Gastrocnemius medialis (tissue), 4 donors: ENCODE measurements at regions of chr19 and their contacts with region 1.

Region 1: GRCh38 chr19:57279418-57280066 is 743 bp upstream of the ZNF460 start:
- DNase-seq: peak; percentile 89 to 93
- ATAC-seq: peak; percentile 90 to 94
- H3K4me3 ChIP-seq: peak overlapping the region; percentile 96 to 97 (median 96)
- H3K27ac ChIP-seq: peak overlapping the region; percentile 93 to 99 (median 96)
- H3K4me1 ChIP-seq: peaks cover 31 to 39% of the 10 kb centered on the region in 2 donors
- H3K27me3 ChIP-seq: no peaks in the 10 kb centered on the region
- CTCF ChIP-seq: peak in 3 of 5 experiments; percentile 31 to 52 (median 33)
- POLR2A ChIP-seq: no peak

Region 2: DNA sequence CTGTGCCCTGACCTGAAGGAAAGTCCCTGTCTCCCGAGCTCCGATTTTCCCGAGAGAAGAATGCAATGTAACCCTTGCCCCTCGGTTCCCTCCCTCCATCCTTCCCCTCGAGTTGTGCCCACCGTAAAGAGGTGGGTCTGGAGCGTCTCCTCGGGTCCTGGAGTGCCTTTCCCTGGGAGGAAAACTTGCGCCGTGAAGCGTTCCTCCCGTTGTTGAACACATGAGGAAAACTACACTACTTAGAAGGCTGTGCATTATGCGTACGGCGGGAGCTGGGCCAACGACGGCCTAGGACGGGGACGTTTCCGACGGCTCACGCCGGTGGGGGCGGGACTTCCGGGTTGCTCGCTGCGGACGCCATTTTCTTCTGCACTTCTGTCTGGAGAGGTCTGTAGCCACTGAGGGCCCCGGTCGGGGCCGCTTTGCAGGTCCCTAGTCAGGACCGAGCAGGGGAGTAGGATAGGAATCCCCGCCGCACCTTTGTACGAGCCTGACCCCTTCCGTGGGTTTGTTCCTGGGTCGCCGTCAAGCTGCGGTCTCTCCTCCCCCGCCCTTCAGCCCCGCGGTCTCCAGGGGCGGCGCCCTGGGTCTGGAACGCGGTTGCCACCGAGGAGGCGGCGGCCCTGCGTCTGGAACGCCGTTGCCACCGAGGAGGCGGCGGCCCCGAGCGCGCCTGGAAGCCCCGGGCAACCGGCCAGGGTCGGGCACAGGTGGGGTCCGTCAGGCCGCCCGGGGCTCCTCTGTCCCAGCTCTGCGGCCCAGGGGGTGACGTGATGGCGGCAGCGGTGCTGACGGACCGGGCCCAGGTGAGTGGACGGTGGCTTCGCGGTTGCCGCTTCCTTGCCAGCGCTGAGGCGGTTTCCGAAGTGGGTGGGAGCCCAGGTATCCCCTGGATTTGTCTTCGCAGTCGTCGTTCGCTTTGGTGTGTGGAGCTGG is 88.1 kb before region 1 on chr19 and contains the start of gene ZNF264:
- in situ Hi-C with region 1: no loop called
- intact Hi-C with region 1: loop called (anchors 5 kb)
- DNase-seq: peak; percentile 74 to 85
- ATAC-seq: peak; percentile 96 to 97
- H3K4me3 ChIP-seq: peak within 1 kb of the TSS; percentile 92 to 96 (median 94)
- H3K27ac ChIP-seq: peak within 1 kb of the TSS; percentile 84 to 96 (median 85)
- H3K4me1 ChIP-seq: peaks cover 19 to 25% of the 10 kb centered on the region in 2 donors
- H3K27me3 ChIP-seq: peaks cover 0 to 11% (median 0%) of the 10 kb centered on the region in 3 donors
- CTCF ChIP-seq: no peak
- POLR2A ChIP-seq: peak in 1 of 2 donors; percentile 32
- total RNA-seq, gene ZNF264: 11.3 to 21.8 (median 16.9) TPM

Region 3: DNA sequence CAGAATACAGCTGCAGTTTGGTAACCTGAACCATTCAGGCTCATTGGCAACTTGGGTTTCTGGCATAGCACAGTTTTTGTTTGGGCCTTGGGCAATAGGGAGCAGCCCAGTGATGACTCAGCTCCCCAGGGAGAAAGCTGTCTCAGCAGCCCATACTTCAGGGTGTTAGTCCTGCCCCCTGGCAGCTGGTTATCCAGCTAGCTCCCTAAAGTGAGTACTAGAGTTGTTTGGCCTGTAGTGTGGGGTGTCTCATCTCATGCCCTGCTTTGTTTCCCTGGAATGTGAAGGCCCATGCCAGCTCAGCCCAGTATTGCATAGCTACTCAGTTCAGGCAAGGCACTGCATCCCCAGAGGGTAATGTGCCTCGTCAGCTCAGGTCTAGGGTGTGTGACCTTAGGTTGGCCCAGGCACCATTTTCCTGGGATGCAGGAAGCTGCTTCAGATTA is 22.5 kb after region 1 on chr19:
- in situ Hi-C with region 1: no loop called
- intact Hi-C with region 1: loop called (anchors 2 kb)
- DNase-seq: peak; percentile 81 to 91
- ATAC-seq: peak; percentile 99 to 100
- H3K4me3 ChIP-seq: no peak overlapping the region
- H3K27ac ChIP-seq: peak overlapping the region; percentile 77 to 83 (median 80)
- H3K4me1 ChIP-seq: peaks cover 23 to 30% of the 10 kb centered on the region in 2 donors
- H3K27me3 ChIP-seq: no peaks in the 10 kb centered on the region
- CTCF ChIP-seq: no peak
- POLR2A ChIP-seq: no peak

Region 4: DNA sequence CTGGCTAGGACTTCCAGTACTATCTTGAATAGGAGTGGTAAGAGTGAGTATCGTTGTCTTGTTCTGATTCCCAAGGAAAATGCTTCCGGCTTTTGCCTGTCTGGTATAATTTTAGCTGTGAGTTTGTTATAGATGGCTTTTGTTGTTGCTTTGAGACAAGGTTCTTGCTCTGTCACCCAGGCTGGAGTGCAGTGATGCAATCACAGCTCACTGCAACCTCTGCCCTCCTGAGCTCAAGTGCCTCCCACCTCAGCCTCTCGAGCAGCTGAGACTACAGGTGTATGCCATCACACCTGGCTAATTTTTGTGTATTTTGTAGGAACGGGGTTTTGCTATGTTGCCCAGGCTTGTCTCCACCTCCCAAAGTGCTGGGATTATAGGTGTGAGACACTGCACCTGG is 34.6 kb after region 1 on chr19:
- in situ Hi-C with region 1: no loop called
- intact Hi-C with region 1: no loop called
- DNase-seq: no peak
- ATAC-seq: no peak
- H3K4me3 ChIP-seq: no peak overlapping the region
- H3K27ac ChIP-seq: no peak overlapping the region
- H3K4me1 ChIP-seq: no peaks in the 10 kb centered on the region
- H3K27me3 ChIP-seq: no peaks in the 10 kb centered on the region
- CTCF ChIP-seq: no peak
- POLR2A ChIP-seq: no peak

Region 5: GRCh38 chr19:57350877-57351805 is 71.6 kb after region 1 on chr19 and contains the start of gene ZNF304:
- in situ Hi-C with region 1: loop called in 1 of 4 experiments (anchors 5 kb)
- intact Hi-C with region 1: loop called (anchors 1 kb)
- DNase-seq: peak; percentile 90 to 93
- ATAC-seq: peak; percentile 97 to 98
- H3K4me3 ChIP-seq: peak within 1 kb of the TSS; percentile 77 to 99 (median 93)
- H3K27ac ChIP-seq: peak within 1 kb of the TSS; percentile 78 to 96 (median 92)
- H3K4me1 ChIP-seq: peaks cover 22 to 29% of the 10 kb centered on the region in 2 donors
- H3K27me3 ChIP-seq: no peaks in the 10 kb centered on the region
- CTCF ChIP-seq: no peak
- POLR2A ChIP-seq: peak; percentile 33 to 36
- total RNA-seq, gene ZNF304: 4.1 to 6.5 (median 4.8) TPM

Region 6: DNA sequence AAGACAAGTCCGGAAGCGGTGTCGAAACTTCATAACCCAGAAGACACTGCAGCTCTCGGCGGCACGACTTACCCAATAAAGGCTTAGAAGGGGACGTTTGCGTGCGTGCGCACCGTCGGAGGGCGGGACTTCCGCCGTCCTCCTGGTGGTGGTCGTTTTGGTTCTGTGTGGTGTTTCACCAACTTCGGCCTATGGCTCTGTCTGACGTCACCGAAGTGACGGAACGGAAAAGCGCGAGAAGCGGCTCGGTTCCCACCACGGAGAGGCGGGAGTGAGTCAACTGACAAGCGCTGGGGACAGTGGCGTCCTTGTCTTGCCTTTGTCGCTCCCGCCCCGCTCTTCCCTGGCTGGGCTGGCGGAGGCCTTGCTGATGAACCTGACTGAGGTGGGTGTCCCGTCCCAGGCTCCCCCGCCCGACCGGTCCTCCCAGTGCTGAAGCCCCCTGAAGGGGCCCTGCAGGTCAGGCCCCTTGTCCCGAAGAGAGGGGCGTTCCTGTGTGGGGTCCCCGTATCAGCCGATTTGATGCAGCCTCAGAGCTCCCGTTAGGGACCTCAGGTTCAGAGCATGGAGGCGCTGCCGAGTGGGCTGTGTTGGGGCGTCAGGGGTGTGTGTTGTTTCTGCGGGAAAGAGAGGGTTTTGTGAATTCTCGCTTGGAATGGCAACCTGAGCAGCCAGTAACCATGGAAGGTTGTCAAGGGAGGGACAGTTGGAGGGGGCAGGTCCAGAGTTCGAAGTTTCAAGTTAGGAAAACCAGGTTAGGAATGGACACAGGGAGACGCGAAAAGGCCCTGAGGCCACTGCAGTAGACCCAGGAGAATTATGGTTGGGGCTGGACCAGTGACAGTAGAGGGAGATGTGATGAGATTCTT is 110.4 kb after region 1 on chr19 and contains the start of gene ZNF548:
- in situ Hi-C with region 1: no loop called
- intact Hi-C with region 1: loop called (anchors 1 kb)
- DNase-seq: peak; percentile 97 to 98
- ATAC-seq: peak; percentile 100
- H3K4me3 ChIP-seq: peak within 1 kb of the TSS; percentile 75 to 85 (median 81)
- H3K27ac ChIP-seq: peak within 1 kb of the TSS; percentile 87 to 98 (median 92)
- H3K4me1 ChIP-seq: peaks cover 22 to 26% of the 10 kb centered on the region in 2 donors
- H3K27me3 ChIP-seq: no peaks in the 10 kb centered on the region
- CTCF ChIP-seq: peak in 4 of 5 experiments; percentile 24 to 41 (median 33)
- POLR2A ChIP-seq: peak; percentile 70 to 78
- total RNA-seq, gene ZNF548: 6.1 to 10.4 (median 8.3) TPM

Region 7: DNA sequence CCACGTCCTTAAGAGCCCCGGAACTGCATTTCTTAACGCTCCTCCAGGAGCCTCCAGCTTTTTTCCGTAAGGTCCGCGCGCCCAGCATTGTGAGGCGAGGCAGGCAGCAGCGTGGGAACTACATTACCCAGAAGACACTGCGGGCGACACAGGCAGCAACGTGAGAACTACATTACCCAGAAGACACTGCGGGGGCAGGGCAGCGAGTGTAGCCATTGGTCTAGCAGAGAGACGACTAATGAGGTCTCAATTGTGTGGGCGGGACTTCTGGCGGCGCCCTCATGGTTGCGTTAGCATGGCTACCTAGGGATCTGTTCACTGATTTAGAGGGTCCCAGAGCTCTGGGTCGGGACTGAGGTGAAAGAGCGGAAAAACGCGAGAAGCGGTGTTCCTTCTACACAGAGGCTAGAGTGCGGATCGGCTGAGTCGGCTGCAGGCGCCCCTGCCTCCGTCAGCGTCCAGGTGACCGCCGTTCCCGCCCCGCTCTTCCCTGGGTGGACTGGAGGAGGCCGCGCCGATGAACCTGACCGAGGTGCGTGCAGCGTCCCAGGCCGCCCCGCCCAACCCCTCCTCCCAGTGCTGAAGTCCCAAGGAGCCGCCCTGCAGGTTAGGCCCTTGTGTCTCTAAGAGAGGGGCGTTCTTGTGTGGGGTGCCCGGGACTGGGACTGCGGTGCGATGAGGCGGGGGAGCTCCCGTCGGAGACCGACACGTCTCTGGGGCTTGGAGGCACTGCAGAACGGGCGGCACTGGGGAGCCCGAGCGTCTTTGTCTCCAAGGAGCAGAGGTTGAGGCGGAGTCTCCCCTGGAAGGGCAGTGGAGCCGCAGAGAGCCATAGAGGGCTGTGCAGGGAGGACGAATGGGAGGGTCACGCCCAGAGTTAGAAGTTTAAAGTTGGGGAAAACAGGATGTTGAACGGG is 155.8 kb after region 1 on chr19 and contains the start of gene ZNF749:
- in situ Hi-C with region 1: no loop called
- intact Hi-C with region 1: loop called (anchors 1 kb)
- DNase-seq: peak; percentile 97 to 99
- ATAC-seq: peak; percentile 100
- H3K4me3 ChIP-seq: peak within 1 kb of the TSS; percentile 87 to 94 (median 90)
- H3K27ac ChIP-seq: peak within 1 kb of the TSS; percentile 70 to 79 (median 75)
- H3K4me1 ChIP-seq: peaks cover 14 to 17% of the 10 kb centered on the region in 2 donors
- H3K27me3 ChIP-seq: no peaks in the 10 kb centered on the region
- CTCF ChIP-seq: no peak
- POLR2A ChIP-seq: no peak
- total RNA-seq, gene ZNF749: 3.1 to 11.4 (median 3.9) TPM